Right lobe of liver (tissue), 6 donors: ENCODE measurements at regions of chr22 and their contacts with region 1.

Region 1: GRCh38 chr22:30079952-30080533 is at the start of gene HORMAD2:
- DNase-seq: peak; percentile 80 to 92 (median 89)
- ATAC-seq: peak; percentile 83 to 93 (median 88)
- H3K4me3 ChIP-seq: peak within 1 kb of the TSS; percentile 36 to 57 (median 55)
- H3K27ac ChIP-seq: peak within 1 kb of the TSS; percentile 37 to 74 (median 63)
- H3K4me1 ChIP-seq: no peaks in the 10 kb centered on the region
- H3K27me3 ChIP-seq: no peaks in the 10 kb centered on the region
- CTCF ChIP-seq: no peak
- POLR2A ChIP-seq: peak; percentile 39
- total RNA-seq, gene HORMAD2: 0.50 to 3.0 (median 1.6) TPM in 5 of 6 experiments, not detected in the other

Region 2: GRCh38 chr22:29907815-29908515 is 172.1 kb before region 1 on chr22:
- intact Hi-C with region 1: no loop called
- DNase-seq: peak; percentile 60 to 80 (median 61)
- ATAC-seq: peak; percentile 62 to 87 (median 68)
- H3K4me3 ChIP-seq: no peak overlapping the region
- H3K27ac ChIP-seq: no peak overlapping the region
- H3K4me1 ChIP-seq: peaks cover 0 to 35% (median 4%) of the 10 kb centered on the region in 4 donors
- H3K27me3 ChIP-seq: no peaks in the 10 kb centered on the region
- CTCF ChIP-seq: no peak
- POLR2A ChIP-seq: no peak

Region 3: DNA sequence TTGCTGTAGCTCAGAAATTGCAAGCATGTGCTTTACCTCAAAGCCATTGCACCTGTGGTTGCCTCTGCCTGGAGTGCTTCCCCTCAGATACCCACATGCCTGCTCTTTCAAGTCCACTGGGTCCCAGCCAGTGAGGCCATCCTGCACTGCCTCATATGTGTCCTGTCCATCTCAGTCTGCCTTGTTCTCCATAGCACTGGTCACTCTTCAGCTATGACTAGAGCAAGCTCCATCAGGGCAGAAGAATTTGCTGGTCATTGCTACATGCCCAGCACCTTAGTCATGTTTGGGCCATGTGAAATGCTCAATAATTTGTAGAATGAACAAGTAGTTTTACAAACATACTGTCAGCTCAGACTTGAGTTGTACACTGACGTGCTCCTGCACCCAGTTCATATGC is 64.2 kb before region 1 on chr22:
- intact Hi-C with region 1: loop called in 1 of 2 experiments (anchors 10 kb)
- DNase-seq: no peak
- ATAC-seq: no peak
- H3K4me3 ChIP-seq: no peak overlapping the region
- H3K27ac ChIP-seq: no peak overlapping the region
- H3K4me1 ChIP-seq: no peaks in the 10 kb centered on the region
- H3K27me3 ChIP-seq: no peaks in the 10 kb centered on the region
- CTCF ChIP-seq: no peak
- POLR2A ChIP-seq: no peak

Region 4: DNA sequence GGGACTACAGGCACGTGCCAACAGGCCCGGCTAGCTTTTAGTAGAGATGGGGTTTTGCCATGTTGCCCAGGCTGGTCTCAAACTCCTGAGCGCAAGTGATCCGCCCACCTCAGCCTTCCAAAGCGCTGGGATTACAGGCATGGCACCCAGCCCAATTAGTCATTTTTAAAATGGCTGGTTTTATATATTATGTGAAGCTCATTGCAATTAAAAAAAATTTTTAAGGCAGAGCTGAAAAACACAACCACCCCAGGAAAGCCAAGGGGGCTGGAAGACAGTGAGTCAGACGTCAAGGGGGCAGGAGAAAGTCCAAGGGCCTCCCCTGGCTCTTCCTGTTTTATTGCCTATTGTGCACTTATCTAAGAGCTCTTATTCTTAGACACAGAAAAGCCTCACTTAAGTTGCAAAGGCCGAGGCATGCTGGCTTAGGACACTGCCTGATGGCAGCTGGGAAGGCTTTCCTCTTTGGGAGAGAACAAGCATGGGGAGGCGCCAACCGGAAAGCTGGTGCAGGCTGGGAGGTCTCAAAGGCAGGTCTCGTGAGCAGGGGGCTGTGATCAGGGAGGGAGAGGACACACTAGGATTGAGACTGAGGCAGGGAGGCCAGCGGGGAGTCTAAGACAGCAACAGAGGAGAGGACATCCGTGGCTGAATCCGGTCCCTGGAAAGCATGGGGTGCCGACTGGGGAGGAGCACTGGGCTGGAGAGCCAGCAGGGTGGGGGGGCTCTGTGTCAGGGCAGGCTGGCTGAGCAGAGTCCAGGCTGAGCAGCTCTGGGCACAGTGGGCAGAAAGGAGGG is 197.7 kb after region 1 on chr22:
- intact Hi-C with region 1: no loop called
- DNase-seq: no peak
- ATAC-seq: peak; percentile 62 to 73 (median 66)
- H3K4me3 ChIP-seq: no peak overlapping the region
- H3K27ac ChIP-seq: peak overlapping the region in 1 of 3 donors; percentile 54
- H3K4me1 ChIP-seq: no peaks in the 10 kb centered on the region
- H3K27me3 ChIP-seq: no peaks in the 10 kb centered on the region
- CTCF ChIP-seq: no peak
- POLR2A ChIP-seq: no peak